ENCODE measurements at regions of chr9 and their contacts with region 1.

Region 1: DNA sequence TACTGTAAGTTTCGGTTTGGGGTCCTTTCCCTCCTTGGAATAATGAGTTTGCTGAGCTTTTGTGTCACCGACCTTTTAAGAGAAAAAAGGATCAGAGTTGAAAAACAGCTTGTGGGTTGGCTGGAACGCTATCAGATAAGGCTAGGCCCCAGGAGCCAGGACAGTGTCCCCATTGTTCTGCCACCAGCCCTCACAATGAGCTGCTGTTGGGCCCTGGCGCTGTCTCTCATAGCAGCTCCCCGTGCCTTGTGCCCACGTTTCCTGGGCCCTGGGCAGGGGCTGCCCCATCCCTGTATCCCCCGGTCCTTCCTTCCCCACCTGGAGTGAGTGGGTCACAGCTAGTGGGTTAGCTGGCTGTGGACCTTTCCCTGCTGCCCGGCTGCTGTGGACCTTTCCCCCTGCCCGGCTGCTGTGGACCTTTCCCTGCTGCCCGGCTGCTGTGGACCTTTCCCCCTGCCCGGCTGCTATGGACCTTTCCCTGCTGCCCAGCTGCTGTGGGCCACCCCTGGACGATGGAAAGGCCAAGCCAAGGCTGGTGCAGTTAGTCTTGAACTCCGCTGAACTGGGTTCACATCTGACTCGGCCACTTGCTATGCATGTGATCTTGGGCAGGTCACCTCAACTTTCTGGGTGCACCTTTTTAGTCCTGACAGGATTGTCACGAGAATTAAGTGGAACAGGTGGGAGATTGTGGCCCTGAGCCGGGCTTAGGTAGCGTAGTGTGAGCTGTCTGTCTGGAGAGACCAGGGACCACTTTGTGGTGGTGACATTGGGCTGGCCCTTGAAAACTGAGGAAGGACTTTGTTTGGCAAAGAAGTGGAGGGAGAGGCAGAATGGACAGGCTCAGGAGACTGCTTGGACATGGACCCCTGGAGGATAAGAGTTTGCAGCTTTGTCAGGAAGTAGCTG is 99.5 kb downstream of the DAB2IP start:
- DNase-seq: no peak
- ATAC-seq: no peak
- H3K4me3 ChIP-seq: no peak overlapping the region
- H3K27ac ChIP-seq: peak overlapping the region in 11 of 12 donors; percentile 13 to 94 (median 68)
- H3K4me1 ChIP-seq: peaks cover 47 to 100% (median 95%) of the 10 kb centered on the region in 12 donors
- H3K27me3 ChIP-seq: no peaks in the 10 kb centered on the region
- CTCF ChIP-seq: no peak
- POLR2A ChIP-seq: no peak

Region 2: DNA sequence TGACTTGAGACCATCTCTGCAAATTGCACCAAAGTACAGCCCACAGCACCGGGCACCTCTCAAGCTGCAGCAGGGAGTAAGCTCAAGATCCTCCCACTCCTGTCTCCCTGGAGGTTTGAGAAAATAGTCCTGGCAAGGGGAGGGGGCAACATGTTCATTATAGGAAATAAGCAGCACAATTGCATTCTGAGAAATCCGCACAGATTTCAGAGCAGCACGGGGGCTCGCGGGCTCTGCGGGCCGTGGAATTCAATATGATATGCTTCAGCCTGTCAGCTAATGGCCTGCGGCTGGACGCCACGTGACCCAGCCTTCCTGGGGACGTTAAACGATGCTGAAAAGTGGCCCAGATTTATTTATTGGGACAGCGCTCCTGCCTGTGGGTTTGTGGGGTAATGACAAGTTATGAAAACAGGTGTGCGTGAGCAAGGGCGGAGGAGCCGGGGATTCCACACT is 56.9 kb after region 1 on chr9:
- intact Hi-C with region 1: no loop called
- DNase-seq: peak in 1 of 5 donors; percentile 37
- ATAC-seq: peak in 1 of 4 donors; percentile 30
- H3K4me3 ChIP-seq: no peak overlapping the region
- H3K27ac ChIP-seq: no peak overlapping the region
- H3K4me1 ChIP-seq: peaks cover 0 to 5% (median 0%) of the 10 kb centered on the region in 12 donors
- H3K27me3 ChIP-seq: no peaks in the 10 kb centered on the region
- CTCF ChIP-seq: peak in 3 of 12 donors; percentile 13 to 24 (median 15)
- POLR2A ChIP-seq: no peak

Region 3: GRCh38 chr9:121984726-121985402 is 233.9 kb after region 1 on chr9:
- intact Hi-C with region 1: loop called in 5 of 10 experiments (anchors 5 to 10 kb)
- DNase-seq: no peak
- ATAC-seq: peak; percentile 19 to 52 (median 44)
- H3K4me3 ChIP-seq: no peak overlapping the region
- H3K27ac ChIP-seq: peak overlapping the region in 10 of 12 donors; percentile 7 to 90 (median 54)
- H3K4me1 ChIP-seq: peaks cover 0 to 41% (median 14%) of the 10 kb centered on the region in 12 donors
- H3K27me3 ChIP-seq: no peaks in the 10 kb centered on the region
- CTCF ChIP-seq: no peak
- POLR2A ChIP-seq: no peak

Region 4: DNA sequence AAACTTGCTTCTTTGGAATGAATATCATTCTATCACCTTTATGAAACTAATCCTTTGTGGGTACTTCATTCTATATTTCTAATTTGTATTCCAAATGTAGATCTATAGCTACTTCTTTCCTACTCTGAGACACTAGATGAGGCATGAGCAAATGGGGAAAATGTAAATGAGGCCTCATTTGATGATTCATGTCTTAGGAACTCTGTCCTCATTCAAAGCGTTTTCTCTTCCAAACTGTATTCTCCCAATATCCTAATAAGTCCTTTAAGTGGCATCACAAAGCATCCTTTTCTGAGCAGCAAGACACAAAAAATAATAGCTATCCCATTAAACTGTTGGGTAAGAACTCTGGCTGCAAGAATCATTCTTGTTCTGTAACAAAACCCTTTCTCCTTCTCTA is 286.0 kb after region 1 on chr9:
- intact Hi-C with region 1: no loop called
- DNase-seq: no peak
- ATAC-seq: no peak
- H3K4me3 ChIP-seq: no peak overlapping the region
- H3K27ac ChIP-seq: no peak overlapping the region
- H3K4me1 ChIP-seq: peaks cover 0 to 14% (median 9%) of the 10 kb centered on the region in 12 donors
- H3K27me3 ChIP-seq: no peaks in the 10 kb centered on the region
- CTCF ChIP-seq: no peak
- POLR2A ChIP-seq: no peak